ENCODE measurements at regions of chr11 and their contacts with region 1.

Region 1: GRCh38 chr11:65040847-65041621 is at the start of gene SAC3D1:
- DNase-seq: peak; percentile 93
- ATAC-seq: peak; percentile 95
- H3K4me3 Mint-ChIP-seq: peak within 1 kb of the TSS; percentile 91
- H3K27ac Mint-ChIP-seq: peak within 1 kb of the TSS; percentile 96
- H3K4me1 Mint-ChIP-seq: peaks cover 15% of the 10 kb centered on the region
- H3K27me3 Mint-ChIP-seq: no peaks in the 10 kb centered on the region
- total RNA-seq, gene SAC3D1: 24.2 to 25.8 TPM

Region 2: DNA sequence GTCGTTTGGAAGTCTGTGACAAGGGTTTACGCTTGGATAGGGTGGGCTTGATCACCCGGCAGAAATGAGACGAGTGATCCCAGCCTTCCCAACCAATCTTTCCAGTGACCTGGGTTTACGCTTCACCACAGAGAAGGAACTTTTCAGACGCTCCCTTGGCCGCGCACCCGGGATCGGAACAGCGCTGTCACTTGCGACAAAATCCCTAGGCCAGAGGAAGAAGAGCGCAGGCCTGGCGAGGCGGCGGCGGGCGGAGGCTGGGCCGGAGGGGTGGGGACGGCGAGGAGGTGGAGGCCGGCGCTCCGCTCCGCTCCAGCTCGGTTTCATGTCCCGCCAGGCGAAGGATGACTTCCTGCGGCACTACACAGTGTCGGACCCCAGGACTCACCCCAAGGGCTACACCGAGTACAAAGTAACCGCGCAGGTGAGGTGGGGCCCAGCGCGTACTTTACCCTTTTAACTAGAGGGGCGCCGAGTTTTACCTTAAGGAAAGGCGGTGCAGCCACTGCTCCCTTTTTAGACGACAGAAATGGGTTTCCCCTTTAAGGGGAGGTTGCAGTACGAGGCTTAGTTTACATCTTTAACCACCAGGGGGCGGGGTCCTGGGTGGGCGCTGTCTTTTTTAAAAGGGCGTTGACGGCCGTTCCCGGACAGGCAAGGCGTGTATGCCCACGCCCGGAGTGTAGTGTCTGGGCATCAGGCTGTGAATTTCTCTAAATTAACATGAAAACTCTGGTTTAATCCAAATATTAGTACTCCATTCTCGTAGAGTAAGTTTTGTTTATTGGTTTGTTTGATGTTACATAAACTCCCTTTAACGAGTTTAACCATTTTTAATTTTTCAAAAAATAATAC is 13.6 kb before region 1 on chr11 and contains the start of gene SNX15:
- POLR2A ChIA-PET with region 1: interaction called, 18 read pairs
- DNase-seq: peak; percentile 85
- ATAC-seq: peak; percentile 89
- H3K4me3 Mint-ChIP-seq: peak within 1 kb of the TSS; percentile 81
- H3K27ac Mint-ChIP-seq: peak within 1 kb of the TSS; percentile 82
- H3K4me1 Mint-ChIP-seq: peaks cover 20% of the 10 kb centered on the region
- H3K27me3 Mint-ChIP-seq: no peaks in the 10 kb centered on the region
- total RNA-seq, gene SNX15: 22.4 to 28.3 TPM